ENCODE measurements at regions of chr1 and their contacts with region 1.

Region 1: DNA sequence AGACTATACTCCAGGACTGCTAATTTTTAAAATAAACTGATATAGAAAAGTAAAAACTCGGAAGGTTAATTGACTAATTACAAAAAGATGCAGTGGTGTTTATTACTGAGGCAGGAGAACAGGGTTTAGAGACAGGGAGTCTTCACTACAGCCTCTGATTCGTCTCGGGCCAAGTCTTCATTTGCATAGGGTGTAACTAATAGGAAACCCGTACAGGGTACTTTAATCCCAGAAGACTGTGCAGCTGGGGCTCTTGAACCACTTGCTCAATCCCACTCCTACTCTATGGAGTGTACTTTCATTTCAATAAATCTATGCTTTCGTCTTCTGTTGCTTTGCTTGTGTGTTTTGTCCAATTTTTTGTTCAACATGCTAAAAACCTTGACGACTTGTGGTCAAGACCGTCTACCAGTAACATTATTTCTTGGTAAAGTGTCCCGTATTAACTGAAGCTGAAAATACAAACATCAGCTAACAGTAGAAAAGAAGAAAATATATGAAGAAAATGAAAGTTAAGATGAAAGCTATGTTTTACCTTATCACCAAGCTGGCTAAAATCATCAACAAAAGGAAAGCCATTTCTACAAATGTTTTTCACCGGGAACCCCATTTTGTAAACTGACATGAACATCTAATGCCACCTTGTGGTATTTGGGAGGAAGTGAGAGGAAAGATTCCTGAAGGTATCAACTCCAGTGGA is 8.0 kb downstream of the SDHB start:
- DNase-seq: peak; percentile 49
- CTCF ChIP-seq: peak; percentile 56

Region 2: DNA sequence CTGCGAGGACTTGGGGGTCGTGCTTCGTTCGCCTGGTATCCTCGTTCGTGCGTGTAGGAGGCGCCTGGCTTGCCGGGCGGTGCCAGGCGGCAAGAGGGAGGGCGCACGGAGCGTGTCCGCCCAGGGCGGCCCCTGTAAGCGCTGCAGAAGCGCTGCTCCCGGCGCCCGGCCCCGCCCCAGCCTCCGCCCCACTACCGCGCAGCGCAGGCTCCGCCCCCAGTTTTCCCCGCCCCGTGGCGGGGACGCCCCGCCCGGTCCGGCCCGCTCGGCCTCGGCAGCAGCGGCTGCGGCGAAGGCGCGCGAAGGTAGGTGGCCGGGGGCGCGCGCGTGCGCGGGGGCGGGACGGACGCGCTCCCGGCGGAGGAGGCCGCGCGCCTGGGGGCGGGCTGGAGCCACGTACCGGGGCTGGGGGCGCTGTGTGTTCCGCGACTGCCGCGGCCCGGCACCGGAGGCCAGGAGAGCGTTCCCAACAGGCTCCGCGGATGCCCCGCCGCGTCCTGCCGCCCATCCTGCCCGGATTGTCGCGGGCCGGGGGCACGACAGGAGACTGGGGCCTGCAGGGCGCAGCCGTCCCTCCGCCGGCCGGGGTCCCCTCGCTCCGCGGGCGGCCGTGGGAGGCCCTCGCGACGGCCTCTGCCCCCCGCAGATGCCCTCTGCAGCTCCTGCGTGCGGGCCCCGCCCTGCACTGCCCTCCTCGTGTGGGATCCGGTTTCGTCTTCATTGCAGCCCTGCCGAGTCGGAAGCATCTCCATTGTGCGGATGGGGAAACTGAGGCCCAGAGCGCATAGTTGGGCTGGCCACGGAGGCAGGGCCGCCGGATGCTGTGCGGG is 131.7 kb before region 1 on chr1:
- CTCF ChIA-PET with region 1: no interaction called
- POLR2A ChIA-PET with region 1: no interaction called
- DNase-seq: peak; percentile 99
- CTCF ChIP-seq: peak; percentile 1

Region 3: GRCh38 chr1:17032741-17033140 is 13.0 kb before region 1 on chr1:
- CTCF ChIA-PET with region 1: interaction called, 10 read pairs
- POLR2A ChIA-PET with region 1: interaction called, 3 read pairs
- DNase-seq: no peak
- CTCF ChIP-seq: no peak

Region 4: DNA sequence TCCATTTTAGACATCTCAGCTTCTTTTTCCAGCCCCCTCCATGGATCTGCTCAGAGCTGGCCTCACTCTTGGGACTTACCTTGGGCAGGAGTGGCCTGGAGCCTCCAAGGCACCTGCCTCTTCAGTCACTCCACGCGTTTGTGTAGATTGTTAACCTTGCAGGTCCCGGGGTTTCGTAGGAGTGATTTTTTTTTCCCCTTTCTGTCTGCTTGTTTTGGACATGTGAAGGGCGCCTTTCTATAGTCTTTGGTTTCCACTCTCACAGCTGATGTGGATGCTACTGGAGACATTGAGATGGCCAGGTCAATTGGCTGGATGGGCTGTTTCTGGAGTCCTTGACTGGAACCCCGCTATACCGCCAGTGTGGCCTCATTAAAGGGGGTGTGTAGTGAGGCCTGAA is 10.0 kb after region 1 on chr1:
- CTCF ChIA-PET with region 1: no interaction called
- POLR2A ChIA-PET with region 1: no interaction called
- DNase-seq: no peak
- CTCF ChIP-seq: no peak

Region 5: DNA sequence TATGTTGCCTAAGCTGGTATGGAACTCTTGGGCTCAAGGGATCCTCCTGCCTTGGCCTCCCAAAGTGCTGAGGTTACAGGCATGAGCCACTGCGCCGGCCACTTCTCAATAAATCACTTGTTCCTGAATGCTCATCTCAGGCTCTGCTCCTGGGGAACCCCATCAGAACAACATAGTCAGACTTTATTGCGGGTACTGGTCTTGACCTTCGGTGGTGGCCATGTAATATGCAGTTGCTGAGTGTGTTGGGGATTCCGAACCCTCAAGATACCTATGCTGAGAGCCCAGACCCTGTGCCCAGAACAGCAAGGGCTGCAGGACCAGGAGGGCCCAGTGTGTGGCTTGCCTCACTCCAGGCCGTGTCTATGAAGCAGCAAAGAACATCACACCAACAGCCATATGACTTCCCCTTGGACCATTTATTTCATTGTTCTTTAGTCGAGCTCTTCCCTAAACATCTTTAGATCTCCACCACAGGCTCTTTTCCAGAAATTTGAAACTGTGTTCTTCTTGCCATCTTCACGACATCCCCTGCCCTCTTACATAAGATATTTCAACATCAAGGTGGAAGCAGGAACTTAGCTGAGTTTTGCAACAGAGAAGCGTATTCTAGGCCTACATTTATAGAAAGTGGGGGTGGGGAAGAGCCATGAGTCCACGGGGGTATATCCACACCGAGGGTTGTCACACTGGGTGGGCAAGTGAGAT is 20.7 kb after region 1 on chr1:
- CTCF ChIA-PET with region 1: no interaction called
- POLR2A ChIA-PET with region 1: no interaction called
- DNase-seq: no peak
- CTCF ChIP-seq: no peak

Region 6: DNA sequence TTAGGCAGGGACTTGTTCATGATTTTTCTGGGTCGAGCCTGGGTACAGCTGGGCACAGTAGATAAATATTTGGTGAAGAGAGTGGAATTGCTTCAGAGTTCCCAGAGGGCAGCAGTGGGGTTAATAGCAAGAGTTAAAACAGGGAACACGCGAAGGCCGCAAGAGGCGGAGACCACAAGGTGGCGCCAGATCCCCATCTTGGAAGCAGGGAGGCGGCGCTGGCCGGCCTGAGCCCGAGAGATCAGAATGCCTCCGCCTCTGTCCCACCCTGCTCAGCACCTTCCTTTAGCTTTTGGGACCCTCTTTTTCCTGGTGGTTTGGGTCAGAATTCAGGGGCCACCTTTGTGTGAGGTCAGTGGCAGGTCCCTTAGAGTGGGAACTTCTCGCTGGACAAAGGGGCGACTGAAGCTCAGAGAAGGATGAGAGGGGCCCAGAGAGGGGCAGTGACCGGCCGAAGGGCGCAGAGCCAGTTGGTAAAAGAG is 80.0 kb after region 1 on chr1:
- CTCF ChIA-PET with region 1: no interaction called
- POLR2A ChIA-PET with region 1: no interaction called
- DNase-seq: peak; percentile 88
- CTCF ChIP-seq: peak; percentile 97